ENCODE measurements at regions of chr19 and their contacts with region 1.

Region 1: GRCh38 chr19:55632463-55632834 is 8.1 kb upstream of the ZNF784 start:
- DNase-seq: peak; percentile 95
- H3K4me3 Mint-ChIP-seq: no peak overlapping the region
- H3K27ac Mint-ChIP-seq: peak overlapping the region; percentile 33
- H3K4me1 Mint-ChIP-seq: peaks cover 49% of the 10 kb centered on the region
- H3K27me3 Mint-ChIP-seq: peaks cover 10% of the 10 kb centered on the region

Region 2: GRCh38 chr19:55516878-55517620 is 115.4 kb before region 1 on chr19:
- CTCF ChIA-PET with region 1: interaction called, 19 read pairs
- POLR2A ChIA-PET with region 1: no interaction called
- DNase-seq: peak; percentile 90
- H3K4me3 Mint-ChIP-seq: peak overlapping the region; percentile 59
- H3K27ac Mint-ChIP-seq: peak overlapping the region; percentile 82
- H3K4me1 Mint-ChIP-seq: peaks cover 3% of the 10 kb centered on the region
- H3K27me3 Mint-ChIP-seq: no peaks in the 10 kb centered on the region

Region 3: GRCh38 chr19:55605207-55605636 is 27.2 kb before region 1 on chr19:
- CTCF ChIA-PET with region 1: interaction called, 30 read pairs
- POLR2A ChIA-PET with region 1: no interaction called
- DNase-seq: peak; percentile 99
- H3K4me3 Mint-ChIP-seq: peak overlapping the region; percentile 78
- H3K27ac Mint-ChIP-seq: peak overlapping the region; percentile 94
- H3K4me1 Mint-ChIP-seq: peaks cover 55% of the 10 kb centered on the region
- H3K27me3 Mint-ChIP-seq: no peaks in the 10 kb centered on the region

Region 4: GRCh38 chr19:55643348-55644176 is 11.1 kb after region 1 on chr19 and contains the start of gene ZNF581:
- CTCF ChIA-PET with region 1: interaction called, 12 read pairs
- POLR2A ChIA-PET with region 1: no interaction called
- DNase-seq: peak; percentile 78
- H3K4me3 Mint-ChIP-seq: peak within 1 kb of the TSS; percentile 93
- H3K27ac Mint-ChIP-seq: peak within 1 kb of the TSS; percentile 98
- H3K4me1 Mint-ChIP-seq: peaks cover 54% of the 10 kb centered on the region
- H3K27me3 Mint-ChIP-seq: no peaks in the 10 kb centered on the region
- total RNA-seq, gene ZNF581: 24.1 to 25.5 TPM

Region 5: DNA sequence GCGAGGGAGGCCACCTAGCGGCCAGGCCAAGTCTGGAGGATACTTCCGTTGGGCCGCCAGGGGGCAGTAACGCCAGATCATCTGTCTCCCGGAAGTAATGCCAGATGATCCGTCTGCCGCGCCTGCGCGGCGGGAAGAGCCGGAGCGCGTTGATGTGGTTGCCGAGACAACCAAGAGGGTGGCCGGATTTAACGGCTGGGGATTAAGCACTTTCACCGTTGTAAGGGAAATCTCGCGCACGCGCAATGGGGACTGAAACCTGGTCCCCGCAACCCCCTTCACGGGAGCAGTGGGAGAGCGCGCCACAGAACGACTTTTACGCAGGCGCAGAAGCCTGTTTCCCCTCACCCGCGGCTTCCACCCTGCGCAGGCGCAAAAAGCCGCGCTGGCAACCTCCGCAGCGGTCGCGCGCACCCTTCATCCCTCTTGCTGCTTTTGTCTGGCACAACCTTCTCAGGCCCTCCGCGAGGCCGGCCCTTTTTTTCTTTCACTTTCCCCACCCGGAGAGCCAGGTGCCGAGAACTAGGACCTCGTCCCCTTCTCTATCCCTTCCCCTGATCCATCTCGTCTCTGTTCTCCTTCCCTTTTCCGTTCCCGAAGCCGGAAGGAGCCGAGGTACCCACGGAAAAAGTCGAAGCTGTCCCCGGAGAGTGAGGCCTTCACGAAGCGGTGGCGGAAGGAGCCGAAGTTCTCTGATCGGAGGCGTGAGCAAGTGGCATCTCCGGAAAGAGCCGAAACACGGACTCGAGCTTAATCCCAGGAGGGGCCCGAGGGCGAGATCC is 21.5 kb after region 1 on chr19:
- CTCF ChIA-PET with region 1: interaction called, 36 read pairs
- POLR2A ChIA-PET with region 1: no interaction called
- DNase-seq: peak; percentile 100
- H3K4me3 Mint-ChIP-seq: peak overlapping the region; percentile 88
- H3K27ac Mint-ChIP-seq: peak overlapping the region; percentile 99
- H3K4me1 Mint-ChIP-seq: peaks cover 44% of the 10 kb centered on the region
- H3K27me3 Mint-ChIP-seq: no peaks in the 10 kb centered on the region

Measured in activated CD4-positive, alpha-beta T cell treated with anti-CD3 and anti-CD28 coated beads, Interleukin-2, amount 10 ng/mL, durations not matched to agents 7 days and 5 days (primary cell).